ENCODE measurements at regions of chr6 and their contacts with region 1.

Region 1: GRCh38 chr6:28355743-28356665 is 6.3 kb downstream of the ZKSCAN3 start:
- DNase-seq: peak; percentile 67 to 84 (median 80)
- ATAC-seq: peak; percentile 86 to 90 (median 89)
- H3K4me3 ChIP-seq: peak overlapping the region; percentile 20 to 86 (median 67)
- H3K27ac ChIP-seq: peak overlapping the region; percentile 72 to 91 (median 89)
- H3K4me1 ChIP-seq: peaks cover 3 to 42% (median 29%) of the 10 kb centered on the region in 12 donors
- H3K27me3 ChIP-seq: no peaks in the 10 kb centered on the region
- CTCF ChIP-seq: peak; percentile 71 to 91 (median 80)
- POLR2A ChIP-seq: no peak

Region 2: DNA sequence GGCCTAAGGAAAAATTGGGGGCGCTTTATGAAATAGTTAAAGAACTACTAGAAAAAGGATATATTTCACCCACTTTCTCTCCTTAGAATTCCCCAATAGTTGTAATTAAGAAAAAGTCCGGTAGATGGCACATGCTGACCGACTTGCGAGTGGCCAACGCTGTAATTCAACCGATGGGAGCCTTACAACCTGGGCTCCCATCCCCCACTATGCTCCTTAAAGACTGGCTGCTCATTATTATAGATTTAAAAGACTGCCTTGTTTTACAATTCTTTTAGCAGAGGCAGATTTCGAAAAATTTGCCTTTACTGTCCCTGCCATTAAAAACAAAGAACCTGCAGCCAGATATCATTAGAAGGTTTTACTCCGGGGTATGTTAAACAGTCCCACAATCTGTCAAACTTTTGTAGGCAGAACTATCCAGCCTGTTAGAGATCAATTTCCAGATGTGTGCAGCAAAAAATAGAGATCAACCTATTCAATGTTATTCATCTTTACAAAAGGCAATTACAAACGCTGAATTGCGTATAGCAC is 1167.1 kb before region 1 on chr6:
- intact Hi-C with region 1: loop called in 2 of 10 experiments (anchors 10 kb)
- DNase-seq: peak in 4 of 5 donors; percentile 52 to 65 (median 54)
- ATAC-seq: peak; percentile 77 to 97 (median 93)
- H3K4me3 ChIP-seq: peak overlapping the region; percentile 30 to 75 (median 65)
- H3K27ac ChIP-seq: peak overlapping the region in 11 of 12 donors; percentile 45 to 80 (median 65)
- H3K4me1 ChIP-seq: peaks cover 0 to 9% (median 4%) of the 10 kb centered on the region in 12 donors
- H3K27me3 ChIP-seq: peaks cover 0 to 4% (median 0%) of the 10 kb centered on the region in 9 donors
- CTCF ChIP-seq: peak; percentile 65 to 85 (median 78)
- POLR2A ChIP-seq: no peak

Region 3: GRCh38 chr6:28124971-28125353 is 231.0 kb before region 1 on chr6:
- intact Hi-C with region 1: loop called in 2 of 10 experiments (anchors 5 kb)
- DNase-seq: no peak
- ATAC-seq: no peak
- H3K4me3 ChIP-seq: peak overlapping the region; percentile 45 to 92 (median 71)
- H3K27ac ChIP-seq: peak overlapping the region in 11 of 12 donors; percentile 24 to 75 (median 63)
- H3K4me1 ChIP-seq: peaks cover 0 to 38% (median 21%) of the 10 kb centered on the region in 12 donors
- H3K27me3 ChIP-seq: no peaks in the 10 kb centered on the region
- CTCF ChIP-seq: no peak
- POLR2A ChIP-seq: no peak

Region 4: DNA sequence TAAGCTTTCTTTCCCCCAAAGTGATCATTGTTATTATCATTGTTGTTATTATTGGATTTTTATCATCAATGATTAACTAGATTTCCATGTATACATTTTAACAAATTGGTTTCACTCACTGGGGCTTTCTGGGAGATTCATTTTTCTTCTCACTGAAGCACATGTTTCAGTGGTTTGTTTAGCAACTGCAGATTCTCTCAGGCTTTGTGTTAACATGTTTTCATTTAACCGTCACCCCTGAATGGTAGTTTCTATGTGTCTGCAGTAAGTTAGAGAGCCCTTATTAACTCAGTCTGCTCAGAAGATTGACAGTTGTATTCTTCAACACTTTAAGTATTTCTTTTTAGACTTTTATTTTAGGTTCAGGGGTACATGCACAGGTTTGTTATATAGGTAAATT is 116.4 kb before region 1 on chr6:
- intact Hi-C with region 1: loop called in 1 of 10 experiments (anchors 10 kb)
- DNase-seq: no peak
- ATAC-seq: no peak
- H3K4me3 ChIP-seq: no peak overlapping the region
- H3K27ac ChIP-seq: no peak overlapping the region
- H3K4me1 ChIP-seq: peaks cover 0 to 19% (median 0%) of the 10 kb centered on the region in 12 donors
- H3K27me3 ChIP-seq: no peaks in the 10 kb centered on the region
- CTCF ChIP-seq: no peak
- POLR2A ChIP-seq: no peak

Region 5: DNA sequence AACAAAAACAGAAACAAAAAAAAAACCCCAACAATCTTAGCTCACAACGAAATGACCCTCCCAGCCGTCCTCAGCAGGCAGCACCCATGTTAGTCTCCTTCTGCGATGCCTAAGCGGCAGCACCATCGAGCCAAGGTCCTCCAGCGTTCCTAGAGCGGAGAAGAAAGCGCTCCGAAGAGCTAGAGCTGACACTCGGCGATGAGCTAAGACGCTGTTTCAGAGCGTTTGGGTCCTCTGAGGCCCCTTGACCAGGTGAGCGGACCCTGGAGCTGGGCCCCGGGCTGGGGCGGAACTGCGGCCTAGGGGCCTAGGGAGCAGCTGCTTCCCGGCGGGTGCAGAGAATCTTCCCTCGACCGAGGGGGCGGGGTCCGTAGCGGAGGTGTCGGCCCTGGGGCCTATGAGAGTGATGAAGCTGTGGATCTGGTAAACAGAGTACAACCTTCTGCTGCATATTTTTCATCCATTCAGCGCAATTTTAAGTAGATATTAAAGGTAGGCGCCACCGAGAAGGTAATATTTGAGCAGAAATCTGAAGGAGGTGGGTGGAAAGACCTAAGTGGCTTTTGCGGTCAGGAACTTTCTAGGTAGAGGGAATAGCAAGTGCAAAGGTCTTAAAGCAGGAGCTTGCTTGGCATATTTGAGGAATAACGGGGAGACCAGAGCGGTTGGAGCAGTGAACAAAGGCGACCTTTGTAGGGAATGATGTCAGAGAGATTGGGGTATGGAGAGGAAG is 88.9 kb before region 1 on chr6 and contains the start of gene ZSCAN26:
- intact Hi-C with region 1: loop called in 3 of 10 experiments (anchors 5 kb)
- DNase-seq: peak; percentile 79 to 88 (median 87)
- ATAC-seq: peak; percentile 92 to 99 (median 98)
- H3K4me3 ChIP-seq: peak within 1 kb of the TSS; percentile 29 to 88 (median 76)
- H3K27ac ChIP-seq: peak within 1 kb of the TSS; percentile 45 to 93 (median 87)
- H3K4me1 ChIP-seq: peaks cover 0 to 35% (median 12%) of the 10 kb centered on the region in 12 donors
- H3K27me3 ChIP-seq: no peaks in the 10 kb centered on the region
- CTCF ChIP-seq: peak in 1 of 12 donors; percentile 14
- POLR2A ChIP-seq: peak in 1 of 2 donors; percentile 53
- total RNA-seq, gene ZSCAN26: 9.8 to 16.4 (median 12.2) TPM